Posterior vena cava (tissue), 2 donors: ENCODE measurements at regions of chr12 and their contacts with region 1.

Region 1: GRCh38 chr12:28127455-28127854 is 62.8 kb upstream of the CCDC91 start:
- DNase-seq: no peak

Region 2: GRCh38 chr12:27772652-27773051 is 354.8 kb before region 1 on chr12:
- intact Hi-C with region 1: no loop called
- DNase-seq: no peak

Region 3: DNA sequence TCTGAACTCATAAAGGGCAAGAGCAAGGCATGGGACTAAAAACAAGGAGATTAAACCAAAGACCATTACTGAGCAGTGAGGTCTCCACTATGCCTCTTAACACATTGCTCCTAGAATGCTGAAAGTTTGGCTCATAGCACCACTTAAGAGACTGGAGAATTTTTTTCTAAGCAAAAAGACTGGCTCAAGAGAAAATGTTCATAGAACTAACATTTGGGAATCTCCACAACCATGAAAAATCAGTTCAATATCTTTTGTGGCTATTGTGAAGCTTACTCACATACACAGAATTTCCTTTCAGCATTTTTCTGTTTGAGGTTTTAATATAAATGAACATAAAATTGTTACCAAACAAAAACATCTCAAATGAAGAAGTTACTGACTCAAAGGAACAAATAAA is 318.6 kb after region 1 on chr12:
- intact Hi-C with region 1: loop called in 1 of 2 experiments (anchors 10 kb)
- DNase-seq: no peak